ENCODE measurements at regions of chr1 and their contacts with region 1.

Region 1: DNA sequence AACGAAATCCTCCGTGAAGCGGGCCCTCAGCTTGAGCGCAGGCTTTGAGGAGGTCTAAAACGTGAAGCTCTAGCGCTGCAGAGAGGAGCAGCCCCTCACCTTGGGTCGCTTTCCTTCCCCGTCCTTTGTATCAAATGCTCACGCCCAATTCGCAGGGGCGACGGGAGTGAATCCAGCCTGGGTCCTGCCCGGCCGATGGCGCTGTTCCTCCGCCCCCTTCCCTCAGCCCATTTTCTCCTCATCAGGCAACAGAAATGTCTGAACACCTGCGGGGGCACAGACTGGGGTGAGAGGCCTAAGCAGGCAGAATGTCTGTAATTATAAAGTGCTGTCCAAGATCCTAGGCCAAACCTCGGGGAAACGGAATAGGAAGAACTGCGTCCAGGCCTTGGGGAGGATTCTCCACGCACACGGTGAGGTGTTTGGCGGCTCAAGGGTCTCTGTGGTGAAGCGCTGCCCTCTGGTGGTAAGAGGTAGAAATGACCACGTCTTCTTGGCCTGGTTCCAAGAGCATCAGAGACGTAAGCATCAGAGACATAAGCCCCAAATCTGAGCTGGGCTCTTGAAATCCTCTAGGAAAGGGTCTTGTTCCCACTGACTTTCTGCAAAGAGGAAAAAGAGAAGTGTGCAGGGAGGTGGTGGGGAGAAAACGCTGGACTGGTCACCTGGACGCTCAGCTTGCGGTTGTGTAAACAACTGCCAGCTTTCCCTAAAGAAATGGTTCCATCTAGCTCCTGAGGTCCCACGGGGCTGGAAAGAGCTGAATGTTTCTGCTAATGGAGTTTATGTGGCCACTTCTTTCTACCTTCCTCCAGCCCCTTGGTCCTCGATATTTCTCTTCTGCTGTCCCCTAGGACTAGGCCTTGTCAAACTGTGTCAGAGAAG is 92.1 kb upstream of the CD53 start:
- DNase-seq: peak; percentile 71
- CTCF ChIP-seq: peak; percentile 75

Region 2: GRCh38 chr1:110619412-110620249 is 161.2 kb before region 1 on chr1:
- in situ Hi-C with region 1: loop called (anchors 5 kb)
- DNase-seq: peak; percentile 87
- CTCF ChIP-seq: peak; percentile 94

Region 3: GRCh38 chr1:110671361-110671760 is 109.5 kb before region 1 on chr1:
- in situ Hi-C with region 1: no loop called
- DNase-seq: no peak
- CTCF ChIP-seq: no peak

Region 4: DNA sequence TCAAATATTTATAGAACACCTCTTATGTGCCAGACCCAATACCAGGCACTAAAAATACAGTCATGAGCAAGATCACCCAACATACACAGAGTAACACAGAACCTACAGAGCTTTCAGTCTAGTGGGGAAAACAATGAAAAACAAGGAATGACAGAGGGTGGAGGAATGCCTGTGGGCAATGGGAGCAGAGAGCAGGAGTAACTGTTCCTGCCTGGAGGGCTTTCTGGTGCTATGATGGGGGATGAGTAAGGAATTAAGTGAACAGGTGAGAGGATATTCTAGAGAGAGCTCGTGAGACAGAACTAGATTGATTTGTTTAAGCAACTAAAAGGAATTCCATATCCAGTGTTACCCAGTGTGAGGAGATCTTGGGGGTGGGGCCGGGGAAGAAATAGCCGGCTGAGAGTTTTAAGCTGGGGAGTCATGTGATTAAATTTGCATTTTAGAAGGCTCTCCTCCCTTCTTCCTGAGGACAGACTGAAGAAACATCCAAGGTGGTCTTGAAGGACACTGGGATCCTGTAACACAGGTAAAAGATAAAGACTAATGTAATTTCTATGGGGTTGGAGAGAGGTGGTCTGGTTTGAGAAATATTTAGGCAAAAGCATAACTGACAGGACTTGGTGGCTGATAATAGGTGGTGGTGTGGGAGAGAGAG is 90.0 kb after region 1 on chr1:
- in situ Hi-C with region 1: no loop called
- DNase-seq: no peak
- CTCF ChIP-seq: no peak

Region 5: GRCh38 chr1:110990536-110990935 is 209.7 kb after region 1 on chr1:
- in situ Hi-C with region 1: loop called (anchors 10 kb)
- DNase-seq: no peak
- CTCF ChIP-seq: no peak

Measured in GM13976 (cell line).